ENCODE measurements at regions of chr3 and their contacts with region 1.

Region 1: GRCh38 chr3:10322352-10322710 is 1.4 kb upstream of the SEC13 start:
- DNase-seq: no peak
- ATAC-seq: no peak
- H3K4me3 Mint-ChIP-seq: no peak overlapping the region
- H3K27ac Mint-ChIP-seq: no peak overlapping the region
- H3K4me1 Mint-ChIP-seq: peaks cover 24% of the 10 kb centered on the region
- H3K27me3 Mint-ChIP-seq: peaks cover 17% of the 10 kb centered on the region

Region 2: GRCh38 chr3:10248184-10249080 is 73.9 kb before region 1 on chr3 and contains the start of gene TATDN2:
- CTCF ChIA-PET with region 1: interaction called, 10 read pairs
- DNase-seq: peak; percentile 98
- ATAC-seq: peak; percentile 96
- H3K4me3 Mint-ChIP-seq: peak within 1 kb of the TSS; percentile 98
- H3K27ac Mint-ChIP-seq: peak within 1 kb of the TSS; percentile 96
- H3K4me1 Mint-ChIP-seq: peaks cover 48% of the 10 kb centered on the region
- H3K27me3 Mint-ChIP-seq: no peaks in the 10 kb centered on the region
- total RNA-seq, gene TATDN2: 60.2 to 67.1 TPM

Region 3: DNA sequence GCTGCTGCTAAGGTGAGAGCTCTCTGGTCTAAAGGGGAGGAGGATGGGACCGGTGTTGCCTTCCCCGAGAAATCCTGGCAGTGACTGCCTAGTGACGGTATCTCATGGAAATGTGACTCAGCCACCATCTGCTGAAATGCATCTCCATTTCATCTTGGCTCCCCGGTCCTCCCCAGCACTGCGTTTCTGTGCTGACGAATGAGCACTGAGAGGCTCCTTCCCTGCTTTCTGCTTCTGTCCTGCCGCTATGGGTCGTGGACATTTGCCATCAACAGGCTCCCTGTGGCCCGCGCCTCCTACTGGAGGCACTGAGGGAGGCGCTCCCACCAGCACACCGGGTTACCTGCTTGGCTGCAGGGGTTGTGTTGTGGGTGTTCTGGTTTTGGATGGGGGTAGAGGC is 12.1 kb after region 1 on chr3:
- CTCF ChIA-PET with region 1: interaction called, 11 read pairs
- DNase-seq: no peak
- ATAC-seq: no peak
- H3K4me3 Mint-ChIP-seq: no peak overlapping the region
- H3K27ac Mint-ChIP-seq: no peak overlapping the region
- H3K4me1 Mint-ChIP-seq: peaks cover 30% of the 10 kb centered on the region
- H3K27me3 Mint-ChIP-seq: peaks cover 11% of the 10 kb centered on the region

Region 4: DNA sequence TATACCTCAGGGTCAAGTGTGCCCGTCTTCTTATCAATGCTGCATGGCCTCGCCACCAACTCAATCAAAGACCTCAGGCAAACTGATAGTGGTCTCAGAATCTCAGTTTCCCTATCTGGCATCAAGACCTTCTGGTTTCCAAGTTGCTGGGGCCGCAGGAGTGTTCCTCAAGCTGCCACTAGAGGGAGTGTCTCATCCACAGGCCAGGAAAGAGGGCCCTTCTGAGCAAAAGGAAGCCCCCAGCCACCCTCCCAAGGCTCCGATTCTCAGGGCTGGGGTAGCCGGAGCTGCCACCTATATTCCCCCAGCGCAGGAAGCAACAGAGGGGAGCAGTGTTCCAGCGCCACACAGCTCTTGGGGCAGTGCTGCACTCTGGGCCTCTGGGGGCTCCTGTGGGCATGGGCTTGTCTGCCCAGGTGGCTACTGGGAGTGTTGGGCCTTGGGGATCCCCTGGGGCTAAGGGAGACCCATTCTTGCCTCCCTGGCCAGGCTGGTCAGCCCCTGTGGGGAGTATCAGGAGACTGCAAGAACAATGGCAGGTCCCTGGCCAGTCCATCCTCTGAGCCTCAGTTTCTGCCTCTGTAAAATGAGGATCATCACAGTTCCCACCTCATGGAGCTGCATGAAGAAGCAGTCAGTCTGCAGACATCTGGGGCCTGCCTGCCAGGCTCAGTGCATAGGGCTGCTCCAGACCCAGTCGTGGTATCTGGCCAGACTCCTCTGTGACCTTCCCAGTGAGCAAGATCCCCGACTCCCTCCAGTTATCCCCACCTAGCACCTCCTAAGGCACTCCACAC is 22.0 kb after region 1 on chr3:
- CTCF ChIA-PET with region 1: interaction called, 11 read pairs
- DNase-seq: peak; percentile 60
- ATAC-seq: peak; percentile 58
- H3K4me3 Mint-ChIP-seq: no peak overlapping the region
- H3K27ac Mint-ChIP-seq: no peak overlapping the region
- H3K4me1 Mint-ChIP-seq: no peaks in the 10 kb centered on the region
- H3K27me3 Mint-ChIP-seq: peaks cover 3% of the 10 kb centered on the region

Region 5: GRCh38 chr3:12097971-12098370 is 1775.6 kb after region 1 on chr3:
- CTCF ChIA-PET with region 1: no interaction called
- DNase-seq: no peak
- ATAC-seq: no peak
- H3K4me3 Mint-ChIP-seq: no peak overlapping the region
- H3K27ac Mint-ChIP-seq: no peak overlapping the region
- H3K4me1 Mint-ChIP-seq: no peaks in the 10 kb centered on the region
- H3K27me3 Mint-ChIP-seq: peaks cover 22% of the 10 kb centered on the region